ENCODE measurements at regions of chr6 and their contacts with region 1.

Region 1: DNA sequence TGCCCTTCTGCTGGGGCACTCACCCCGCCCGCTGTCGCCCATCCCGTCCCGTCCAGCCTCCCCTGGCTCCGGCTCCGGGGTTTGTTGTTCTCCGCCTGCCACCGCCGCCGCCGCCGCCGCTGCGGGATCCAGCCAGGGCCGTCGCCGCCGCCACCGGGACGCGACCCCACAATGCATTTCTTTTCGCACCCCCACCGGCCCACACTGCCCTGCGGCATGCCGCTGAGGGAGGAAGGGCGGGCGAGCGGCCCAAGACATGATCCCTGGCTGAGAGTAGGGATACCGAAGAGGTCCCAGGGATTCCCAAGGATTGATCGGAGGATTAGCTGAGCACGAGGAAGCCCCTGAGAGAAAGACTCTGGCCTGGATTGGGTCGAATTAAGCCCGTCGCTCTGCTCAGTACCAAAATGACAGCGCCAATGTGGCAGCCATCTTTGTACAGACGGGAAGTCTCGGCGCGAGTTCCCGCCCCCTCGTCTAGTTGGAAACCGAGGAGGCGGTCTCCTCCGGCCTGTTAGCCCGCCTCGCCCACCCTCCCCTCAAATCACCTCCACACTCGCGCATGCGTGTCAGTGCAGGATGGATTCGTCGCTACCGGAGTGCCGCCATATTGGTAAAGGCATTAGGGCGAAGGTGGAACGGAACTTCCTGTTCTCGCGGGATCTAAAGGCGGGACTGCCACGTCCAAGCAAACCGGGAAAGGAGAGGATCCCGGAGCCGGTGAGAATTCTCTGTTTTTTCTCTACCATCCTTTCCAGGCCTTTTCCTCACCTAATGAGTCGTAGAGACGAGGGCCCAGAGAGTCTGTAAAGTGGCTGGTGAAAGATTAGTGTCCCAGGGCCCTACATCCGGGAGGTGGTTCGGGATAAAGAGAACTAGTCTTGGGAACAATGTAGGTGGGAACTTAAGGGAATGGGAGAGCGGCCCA is at the starts of genes RXRB and SLC39A7:
- DNase-seq: peak in 1 of 2 donors; percentile 99
- H3K4me3 ChIP-seq: peak within 1 kb of the TSS; percentile 81 to 96
- H3K27ac ChIP-seq: peak within 1 kb of the TSS; percentile 94
- H3K4me1 ChIP-seq: peaks cover 71% of the 10 kb centered on the region
- H3K27me3 ChIP-seq: no peaks in the 10 kb centered on the region
- CTCF ChIP-seq: no peak
- POLR2A ChIP-seq: peak in 1 of 2 donors; percentile 37
- total RNA-seq, gene RXRB: 28.0 TPM
- total RNA-seq, gene SLC39A7: 36.3 TPM

Region 2: DNA sequence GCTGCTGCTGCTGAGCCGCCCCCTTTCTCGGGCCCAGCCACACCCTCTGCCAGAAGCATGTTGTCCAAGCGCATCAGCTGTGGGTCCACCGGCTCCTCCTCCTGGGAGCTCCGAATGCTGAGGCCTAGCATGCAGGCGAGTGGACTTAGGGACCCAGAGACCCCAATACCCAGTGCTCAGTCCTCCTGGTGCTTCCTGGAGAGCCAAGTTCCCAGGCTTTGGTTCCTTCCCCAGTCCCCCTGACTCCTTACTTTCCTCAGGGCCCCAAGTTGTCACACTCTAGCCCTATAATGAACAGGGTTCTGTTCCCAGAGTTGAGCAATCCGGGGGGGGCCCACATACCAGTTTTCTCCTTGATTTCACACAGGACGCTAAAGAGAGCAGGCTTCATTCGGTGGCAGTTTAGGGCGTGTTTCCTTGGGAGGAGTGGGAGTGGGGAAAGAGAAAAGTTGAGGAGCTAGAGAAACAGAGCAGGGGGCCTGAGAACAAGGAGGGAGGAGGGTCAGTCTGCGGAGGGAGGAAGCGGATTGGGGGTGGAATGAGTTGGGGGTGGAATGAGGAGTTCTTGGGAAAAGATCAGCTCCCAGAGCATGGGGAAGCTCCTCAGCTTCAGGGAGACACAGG is 1012.0 kb before region 1 on chr6:
- intact Hi-C with region 1: loop called (anchors 10 kb)
- DNase-seq: no peak
- H3K4me3 ChIP-seq: peak overlapping the region; percentile 57 to 85
- H3K27ac ChIP-seq: peak overlapping the region; percentile 99
- H3K4me1 ChIP-seq: peaks cover 72% of the 10 kb centered on the region
- H3K27me3 ChIP-seq: no peaks in the 10 kb centered on the region
- CTCF ChIP-seq: no peak
- POLR2A ChIP-seq: no peak

Region 3: DNA sequence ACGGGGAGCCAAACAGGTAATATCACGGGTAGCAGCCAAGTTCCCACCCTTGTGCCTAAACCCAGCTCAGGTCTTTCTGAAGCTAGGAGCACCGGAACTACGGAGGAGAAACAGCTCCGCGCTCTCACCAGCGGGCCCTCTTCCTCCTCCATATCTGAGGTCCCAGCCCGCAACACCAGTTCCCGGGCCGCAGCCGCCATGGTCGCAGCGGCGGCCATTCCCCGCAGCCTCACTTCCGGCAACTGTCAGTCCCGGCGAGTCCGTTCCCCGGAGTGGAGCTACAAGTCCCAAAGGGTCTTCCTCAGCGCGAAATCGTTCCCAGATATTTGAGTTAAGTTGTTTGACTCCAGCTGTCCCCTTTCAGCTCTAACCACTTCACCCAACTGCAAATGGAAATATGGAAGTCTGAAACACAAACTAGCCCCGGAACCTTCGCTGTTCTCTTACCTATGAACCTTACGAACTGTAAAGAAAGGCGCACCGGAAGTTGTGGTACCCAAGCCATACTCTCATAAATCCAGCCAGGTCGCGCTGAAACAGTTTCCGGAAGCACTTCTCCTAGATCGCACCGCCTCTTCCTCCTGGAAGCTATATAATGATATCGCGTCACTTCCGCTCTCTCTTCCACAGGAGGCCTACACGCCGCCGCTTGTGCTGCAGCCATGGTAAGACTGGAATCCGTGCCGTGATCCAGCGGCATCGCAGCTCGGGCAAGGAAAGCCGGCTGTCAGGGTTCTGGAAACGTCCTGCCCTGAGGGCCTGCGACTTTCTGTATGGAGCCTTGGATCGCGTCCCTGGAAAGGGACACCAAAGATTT is 71.2 kb after region 1 on chr6 and contains the starts of genes RPS18 and VPS52:
- intact Hi-C with region 1: loop called (anchors 5 kb)
- DNase-seq: peak in 1 of 2 donors; percentile 99
- H3K4me3 ChIP-seq: peak within 1 kb of the TSS; percentile 59 to 69
- H3K27ac ChIP-seq: peak within 1 kb of the TSS; percentile 83
- H3K4me1 ChIP-seq: peaks cover 58% of the 10 kb centered on the region
- H3K27me3 ChIP-seq: no peaks in the 10 kb centered on the region
- CTCF ChIP-seq: no peak
- POLR2A ChIP-seq: peak in 1 of 2 donors; percentile 94
- total RNA-seq, gene RPS18: 3,296 TPM
- total RNA-seq, gene VPS52: 42.2 TPM

Measured in vagina (tissue), 2 donors.